CD4-positive, alpha-beta T cell (primary cell): ENCODE measurements at regions of chr3 and their contacts with region 1.

Region 1: GRCh38 chr3:45870099-45870498 is 16.2 kb upstream of the CCR9 start:
- DNase-seq: peak; percentile 51 to 93 (median 64)
- ATAC-seq: peak; percentile 90
- H3K4me3 ChIP-seq: no peak overlapping the region
- H3K4me3 Mint-ChIP-seq: peak overlapping the region; percentile 1
- H3K27ac ChIP-seq: no peak overlapping the region
- H3K27ac Mint-ChIP-seq: peak overlapping the region; percentile 34
- H3K4me1 ChIP-seq: peaks cover 35% of the 10 kb centered on the region
- H3K4me1 Mint-ChIP-seq: peaks cover 69% of the 10 kb centered on the region
- H3K27me3 ChIP-seq: peaks cover 0 to 3% of the 10 kb centered on the region in 2 experiments
- H3K27me3 Mint-ChIP-seq: peaks cover 3% of the 10 kb centered on the region
- CTCF ChIP-seq: no peak

Region 2: DNA sequence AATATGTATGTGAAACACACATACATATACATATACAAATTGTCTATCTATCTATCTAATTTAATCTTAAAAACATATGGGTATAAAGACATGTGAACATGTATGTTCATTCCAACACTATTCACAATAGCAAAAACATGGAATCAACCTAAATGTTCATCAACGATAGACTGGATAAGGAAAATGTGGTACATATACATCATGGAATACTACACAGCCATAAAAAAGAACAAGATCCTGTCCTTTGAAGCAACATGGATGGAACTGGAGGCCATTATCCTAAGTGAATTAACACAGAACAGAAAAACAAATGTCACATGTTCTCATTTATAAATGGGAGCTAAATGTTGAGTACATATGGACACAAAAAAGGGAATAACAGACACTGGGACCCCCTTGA is 22.1 kb after region 1 on chr3:
- CTCF ChIA-PET with region 1: no interaction called
- POLR2A ChIA-PET with region 1: interaction called, 5 read pairs
- intact Hi-C with region 1: loop called in 1 of 2 experiments (anchors 1 kb)
- DNase-seq: no peak
- ATAC-seq: no peak
- H3K4me3 ChIP-seq: no peak overlapping the region
- H3K4me3 Mint-ChIP-seq: no peak overlapping the region
- H3K27ac ChIP-seq: no peak overlapping the region
- H3K27ac Mint-ChIP-seq: peak overlapping the region; percentile 75
- H3K4me1 ChIP-seq: peaks cover 20% of the 10 kb centered on the region
- H3K4me1 Mint-ChIP-seq: peaks cover 58% of the 10 kb centered on the region
- H3K27me3 ChIP-seq: no peaks in the 10 kb centered on the region
- H3K27me3 Mint-ChIP-seq: peaks cover 4% of the 10 kb centered on the region
- CTCF ChIP-seq: no peak

Region 3: DNA sequence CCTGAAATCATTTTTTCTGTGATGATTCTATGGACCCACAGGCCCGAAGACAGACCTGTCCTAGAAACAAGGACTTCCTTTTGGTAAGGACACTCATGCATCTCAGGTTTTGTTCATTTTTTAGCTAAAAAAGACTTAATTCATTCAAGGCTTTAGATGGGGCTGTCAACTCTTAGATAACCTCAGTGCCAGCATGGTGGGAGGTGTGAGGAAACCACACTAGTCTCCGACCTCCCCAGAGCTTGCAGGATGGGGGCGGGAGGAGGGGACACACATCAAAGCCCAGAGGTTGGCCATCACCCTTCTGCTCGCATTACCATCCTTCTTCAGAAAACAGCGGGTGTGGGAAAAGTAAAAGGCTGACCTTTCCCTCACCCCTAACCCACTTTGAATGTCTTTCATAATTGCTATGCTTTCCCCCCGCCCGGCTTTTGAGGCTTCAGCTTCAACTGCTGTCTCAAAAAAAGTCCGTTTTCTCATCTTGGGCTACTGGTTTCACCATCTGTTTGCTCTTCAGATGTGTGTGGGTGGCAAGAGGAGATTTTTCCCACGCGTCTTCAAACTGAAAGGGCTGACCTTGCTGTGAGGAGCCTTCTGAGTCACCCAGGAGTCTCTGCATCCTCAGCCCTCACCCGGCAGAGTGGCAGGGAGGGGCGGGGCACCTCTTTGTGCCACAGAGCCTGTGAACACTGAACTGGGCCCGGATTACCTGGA is 45.6 kb after region 1 on chr3:
- CTCF ChIA-PET with region 1: no interaction called
- POLR2A ChIA-PET with region 1: no interaction called
- intact Hi-C with region 1: loop called in 1 of 2 experiments (anchors 5 kb)
- DNase-seq: peak; percentile 47 to 85 (median 68)
- ATAC-seq: peak; percentile 88
- H3K4me3 ChIP-seq: peak overlapping the region; percentile 42
- H3K4me3 Mint-ChIP-seq: peak overlapping the region; percentile 87
- H3K27ac ChIP-seq: peak overlapping the region in 1 of 2 donors; percentile 47
- H3K27ac Mint-ChIP-seq: peak overlapping the region; percentile 72
- H3K4me1 ChIP-seq: peaks cover 55% of the 10 kb centered on the region
- H3K4me1 Mint-ChIP-seq: peaks cover 49% of the 10 kb centered on the region
- H3K27me3 ChIP-seq: no peaks in the 10 kb centered on the region
- H3K27me3 Mint-ChIP-seq: no peaks in the 10 kb centered on the region
- CTCF ChIP-seq: no peak

Region 4: GRCh38 chr3:46660543-46661523 is 790.7 kb after region 1 on chr3:
- CTCF ChIA-PET with region 1: no interaction called
- POLR2A ChIA-PET with region 1: no interaction called
- intact Hi-C with region 1: no loop called
- DNase-seq: peak in 1 of 14 experiments; percentile 24
- ATAC-seq: no peak
- H3K4me3 ChIP-seq: no peak overlapping the region
- H3K4me3 Mint-ChIP-seq: no peak overlapping the region
- H3K27ac ChIP-seq: no peak overlapping the region
- H3K27ac Mint-ChIP-seq: no peak overlapping the region
- H3K4me1 ChIP-seq: no peaks in the 10 kb centered on the region
- H3K4me1 Mint-ChIP-seq: no peaks in the 10 kb centered on the region
- H3K27me3 ChIP-seq: no peaks in the 10 kb centered on the region
- H3K27me3 Mint-ChIP-seq: peaks cover 4% of the 10 kb centered on the region
- CTCF ChIP-seq: no peak

Region 5: GRCh38 chr3:47065681-47066080 is 1195.6 kb after region 1 on chr3:
- CTCF ChIA-PET with region 1: no interaction called
- POLR2A ChIA-PET with region 1: no interaction called
- intact Hi-C with region 1: no loop called
- DNase-seq: no peak
- ATAC-seq: no peak
- H3K4me3 ChIP-seq: no peak overlapping the region
- H3K4me3 Mint-ChIP-seq: no peak overlapping the region
- H3K27ac ChIP-seq: no peak overlapping the region
- H3K27ac Mint-ChIP-seq: no peak overlapping the region
- H3K4me1 ChIP-seq: no peaks in the 10 kb centered on the region
- H3K4me1 Mint-ChIP-seq: peaks cover 29% of the 10 kb centered on the region
- H3K27me3 ChIP-seq: no peaks in the 10 kb centered on the region
- H3K27me3 Mint-ChIP-seq: no peaks in the 10 kb centered on the region
- CTCF ChIP-seq: no peak